Dendritic cell treated with granulocyte-macrophage colony-stimulating factor and Interleukin-4, amounts not matched to agents 40 ng/mL and 50 ng/mL, for 4 days (primary cell): ENCODE measurements at regions of chr5 and their contacts with region 1.

Region 1: DNA sequence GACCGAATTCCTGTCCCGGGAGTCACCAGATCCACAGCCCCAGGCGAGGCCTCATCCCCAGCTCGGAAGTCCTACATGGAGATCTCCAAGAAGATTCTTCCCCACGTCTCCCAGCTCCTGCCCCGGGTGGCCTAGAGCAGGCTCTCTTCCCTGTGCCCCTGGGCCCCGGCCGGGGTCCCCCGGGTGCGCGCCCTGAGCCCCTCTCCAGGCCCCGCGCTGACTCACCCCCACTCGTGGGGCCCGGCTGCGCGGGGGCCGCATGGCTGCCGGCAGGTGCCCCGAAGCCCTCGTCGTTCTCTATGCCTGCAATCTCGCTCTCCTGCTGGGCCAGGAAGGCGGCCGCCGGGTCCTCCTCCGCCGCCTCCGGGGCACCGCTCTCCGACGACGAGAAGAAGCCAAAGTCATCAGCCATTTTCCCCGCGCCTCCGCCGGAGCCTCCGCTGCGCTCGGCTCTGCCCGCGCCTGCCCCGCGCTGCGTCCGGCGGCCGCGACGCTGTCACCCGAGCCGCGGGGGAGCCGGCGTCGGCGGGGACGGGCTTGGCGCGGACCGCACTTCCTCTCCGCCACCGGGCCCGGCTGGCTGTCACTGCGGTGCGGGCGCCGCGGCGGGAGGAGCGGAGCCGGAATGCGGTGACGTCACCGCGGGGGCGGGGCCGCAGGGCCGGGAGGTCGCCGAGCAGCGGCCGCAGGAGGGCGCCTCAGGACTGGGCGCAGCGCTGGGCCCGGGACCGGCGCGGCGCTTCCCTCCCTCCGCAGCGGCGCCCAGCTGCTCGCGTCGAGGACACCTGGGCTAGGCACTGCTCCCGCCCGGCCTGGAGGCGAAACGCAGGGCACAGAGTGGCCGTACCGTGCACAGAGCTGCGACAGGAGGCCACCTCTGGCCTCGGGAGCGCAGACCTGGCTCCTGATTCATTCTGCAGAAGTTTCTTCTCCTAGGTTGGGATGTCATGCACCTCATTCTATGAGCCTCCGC is at the start of gene CLTB:
- H3K4me3 Mint-ChIP-seq: peak within 1 kb of the TSS; percentile 91
- H3K27ac Mint-ChIP-seq: peak within 1 kb of the TSS; percentile 88
- H3K4me1 Mint-ChIP-seq: peaks cover 39% of the 10 kb centered on the region
- H3K27me3 Mint-ChIP-seq: peaks cover 9% of the 10 kb centered on the region

Region 2: GRCh38 chr5:176388444-176389134 is 27.6 kb before region 1 on chr5 and contains the starts of genes HIGD2A and NOP16:
- intact Hi-C with region 1: loop called (anchors 1 kb)
- H3K4me3 Mint-ChIP-seq: peak within 1 kb of the TSS; percentile 100
- H3K27ac Mint-ChIP-seq: peak within 1 kb of the TSS; percentile 100
- H3K4me1 Mint-ChIP-seq: peaks cover 77% of the 10 kb centered on the region
- H3K27me3 Mint-ChIP-seq: no peaks in the 10 kb centered on the region

Region 3: DNA sequence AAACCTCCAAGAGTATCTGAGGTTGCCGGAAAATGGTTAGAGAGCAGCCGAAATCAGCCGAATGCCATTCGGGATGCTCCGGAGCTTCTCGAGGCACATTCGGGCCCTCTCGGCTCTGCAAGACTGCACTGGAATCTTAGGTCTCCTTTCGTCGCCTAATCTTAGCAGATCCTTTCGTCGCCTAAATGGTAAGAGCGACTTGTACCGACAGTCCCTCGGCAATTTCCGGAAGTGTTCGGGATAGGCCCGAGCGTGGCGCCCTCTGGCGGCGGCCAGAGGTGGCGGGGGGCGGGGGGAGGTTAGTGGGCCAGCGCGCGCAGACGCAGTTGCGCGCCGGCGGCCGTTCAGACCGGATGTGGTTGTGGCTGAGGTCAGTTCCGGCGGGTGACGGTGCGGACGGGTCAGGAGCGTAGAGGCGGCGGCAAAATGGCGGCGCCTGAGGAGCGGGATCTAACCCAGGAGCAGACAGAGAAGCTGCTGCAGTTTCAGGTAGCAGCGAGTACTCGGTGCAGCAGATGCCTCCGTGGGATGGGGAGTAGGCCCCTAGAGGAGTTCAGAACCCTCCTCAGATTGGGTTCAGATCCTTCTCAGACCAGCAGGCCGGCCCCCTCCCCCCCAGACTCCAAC is 31.9 kb after region 1 on chr5 and contains the start of gene FAF2:
- intact Hi-C with region 1: loop called (anchors 2 kb)
- H3K4me3 Mint-ChIP-seq: peak within 1 kb of the TSS; percentile 91
- H3K27ac Mint-ChIP-seq: peak within 1 kb of the TSS; percentile 95
- H3K4me1 Mint-ChIP-seq: peaks cover 34% of the 10 kb centered on the region
- H3K27me3 Mint-ChIP-seq: no peaks in the 10 kb centered on the region

Region 4: DNA sequence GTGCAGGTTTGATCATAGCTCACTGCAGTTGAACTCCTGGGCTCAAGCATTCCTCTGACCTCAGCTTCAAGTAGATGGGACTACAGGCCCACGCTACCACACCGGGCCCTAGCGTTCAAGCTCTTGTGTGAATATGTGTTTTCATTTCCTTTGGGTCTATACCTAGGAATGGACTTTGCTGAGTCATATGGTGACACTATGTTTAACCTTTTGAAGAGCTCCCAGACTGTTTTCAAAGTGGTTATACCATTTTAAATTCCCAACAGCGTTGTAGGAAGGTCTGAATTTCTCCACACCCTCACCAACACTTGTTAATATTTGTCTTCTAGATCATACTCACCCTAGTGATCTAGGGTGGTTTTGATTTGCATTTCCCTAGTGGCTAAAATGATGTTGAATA is 65.5 kb after region 1 on chr5:
- intact Hi-C with region 1: loop called (anchors 10 kb)
- H3K4me3 Mint-ChIP-seq: no peak overlapping the region
- H3K27ac Mint-ChIP-seq: no peak overlapping the region
- H3K4me1 Mint-ChIP-seq: peaks cover 7% of the 10 kb centered on the region
- H3K27me3 Mint-ChIP-seq: no peaks in the 10 kb centered on the region

Region 5: GRCh38 chr5:176537608-176538504 is 121.6 kb after region 1 on chr5:
- intact Hi-C with region 1: loop called (anchors 10 kb)
- H3K4me3 Mint-ChIP-seq: peak overlapping the region; percentile 94
- H3K27ac Mint-ChIP-seq: peak overlapping the region; percentile 96
- H3K4me1 Mint-ChIP-seq: peaks cover 72% of the 10 kb centered on the region
- H3K27me3 Mint-ChIP-seq: no peaks in the 10 kb centered on the region

Region 6: DNA sequence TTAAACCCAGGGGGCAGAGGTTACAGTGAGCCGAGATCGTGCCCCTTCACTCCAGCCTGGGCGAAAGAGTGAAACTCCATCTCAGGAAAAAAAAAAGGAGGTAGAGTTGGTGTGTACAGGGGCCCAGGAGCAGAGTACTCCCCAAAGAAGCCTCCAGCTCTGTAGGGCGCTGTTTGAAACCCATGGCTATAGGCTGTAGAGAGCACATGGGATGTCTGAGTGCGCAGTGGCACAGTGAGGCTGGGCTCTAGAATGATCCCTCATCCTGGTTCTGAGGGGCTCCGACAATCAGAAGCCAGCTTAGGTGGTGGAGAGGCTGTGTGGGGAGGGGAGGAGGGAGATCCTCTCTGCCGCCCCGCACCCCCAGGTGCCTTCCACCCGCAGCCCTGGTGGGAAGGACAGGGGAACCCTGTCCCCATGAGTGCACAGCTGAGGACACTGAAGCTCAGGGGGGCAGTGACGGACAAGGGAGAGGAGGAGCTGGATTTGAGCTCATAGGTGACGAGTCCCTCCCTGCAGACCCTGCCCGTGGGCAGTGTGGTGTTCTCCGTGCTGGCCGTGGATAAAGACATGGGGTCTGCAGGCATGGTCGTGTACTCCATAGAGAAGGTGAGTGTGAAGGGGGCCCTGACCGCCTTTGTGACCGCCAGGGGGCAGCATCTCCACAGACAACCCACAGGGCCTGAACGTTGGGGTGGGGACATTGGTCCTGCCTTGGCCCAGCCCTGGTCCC is 157.5 kb after region 1 on chr5:
- intact Hi-C with region 1: loop called (anchors 10 kb)
- H3K4me3 Mint-ChIP-seq: no peak overlapping the region
- H3K27ac Mint-ChIP-seq: no peak overlapping the region
- H3K4me1 Mint-ChIP-seq: peaks cover 7% of the 10 kb centered on the region
- H3K27me3 Mint-ChIP-seq: peaks cover 21% of the 10 kb centered on the region

Region 7: GRCh38 chr5:176647030-176647866 is 231.0 kb after region 1 on chr5 and contains the start of gene TSPAN17:
- intact Hi-C with region 1: loop called (anchors 2 kb)
- H3K4me3 Mint-ChIP-seq: peak within 1 kb of the TSS; percentile 77
- H3K27ac Mint-ChIP-seq: peak within 1 kb of the TSS; percentile 71
- H3K4me1 Mint-ChIP-seq: peaks cover 35% of the 10 kb centered on the region
- H3K27me3 Mint-ChIP-seq: peaks cover 8% of the 10 kb centered on the region